H1 (cell line): ENCODE measurements at regions of chr13 and their contacts with region 1.

Region 1: GRCh38 chr13:81929988-81930387 is 1589.1 kb upstream of the SPRY2 start:
- DNase-seq: no peak
- H3K4me3 ChIP-seq: no peak overlapping the region
- H3K27ac ChIP-seq: no peak overlapping the region
- H3K4me1 ChIP-seq: peaks cover 0 to 3% (median 0%) of the 10 kb centered on the region in 4 experiments; a peak in 1 of 7 replicates
- H3K27me3 ChIP-seq: no peaks in the 10 kb centered on the region; a peak in 1 of 7 replicates
- CTCF ChIP-seq: peak in 2 of 3 experiments; percentile 47 to 62; a peak in 2 of 4 replicates
- EP300 ChIP-seq: no peak
- POLR2A ChIP-seq: no peak
- RAD21 ChIP-seq: peak; percentile 71 to 81

Region 2: DNA sequence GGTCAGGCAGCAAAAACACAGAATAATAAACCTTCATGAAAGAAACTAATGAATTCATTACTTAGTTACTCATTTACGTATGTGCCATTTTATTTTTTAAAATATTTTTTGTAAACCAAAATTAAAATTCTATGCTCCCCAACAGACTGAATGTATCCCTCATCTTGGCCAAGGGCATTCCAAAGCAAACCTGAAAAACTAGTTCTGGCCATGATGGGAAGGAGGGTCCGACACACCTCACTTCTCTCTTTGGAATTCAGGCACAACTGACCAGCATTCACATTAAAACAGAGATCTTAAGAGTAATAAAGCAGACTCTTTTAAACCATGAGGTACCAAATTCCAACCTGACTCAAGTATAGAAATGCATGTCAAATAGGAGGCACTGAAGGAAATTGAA is 12.2 kb before region 1 on chr13:
- CTCF ChIA-PET with region 1: interaction called, 10 read pairs
- POLR2A ChIA-PET with region 1: no interaction called
- DNase-seq: no peak
- H3K4me3 ChIP-seq: no peak overlapping the region
- H3K27ac ChIP-seq: no peak overlapping the region
- H3K4me1 ChIP-seq: no peaks in the 10 kb centered on the region
- H3K27me3 ChIP-seq: no peaks in the 10 kb centered on the region
- CTCF ChIP-seq: no peak
- EP300 ChIP-seq: no peak
- POLR2A ChIP-seq: no peak
- RAD21 ChIP-seq: no peak